ENCODE measurements at regions of chr6 and their contacts with region 1.

Region 1: DNA sequence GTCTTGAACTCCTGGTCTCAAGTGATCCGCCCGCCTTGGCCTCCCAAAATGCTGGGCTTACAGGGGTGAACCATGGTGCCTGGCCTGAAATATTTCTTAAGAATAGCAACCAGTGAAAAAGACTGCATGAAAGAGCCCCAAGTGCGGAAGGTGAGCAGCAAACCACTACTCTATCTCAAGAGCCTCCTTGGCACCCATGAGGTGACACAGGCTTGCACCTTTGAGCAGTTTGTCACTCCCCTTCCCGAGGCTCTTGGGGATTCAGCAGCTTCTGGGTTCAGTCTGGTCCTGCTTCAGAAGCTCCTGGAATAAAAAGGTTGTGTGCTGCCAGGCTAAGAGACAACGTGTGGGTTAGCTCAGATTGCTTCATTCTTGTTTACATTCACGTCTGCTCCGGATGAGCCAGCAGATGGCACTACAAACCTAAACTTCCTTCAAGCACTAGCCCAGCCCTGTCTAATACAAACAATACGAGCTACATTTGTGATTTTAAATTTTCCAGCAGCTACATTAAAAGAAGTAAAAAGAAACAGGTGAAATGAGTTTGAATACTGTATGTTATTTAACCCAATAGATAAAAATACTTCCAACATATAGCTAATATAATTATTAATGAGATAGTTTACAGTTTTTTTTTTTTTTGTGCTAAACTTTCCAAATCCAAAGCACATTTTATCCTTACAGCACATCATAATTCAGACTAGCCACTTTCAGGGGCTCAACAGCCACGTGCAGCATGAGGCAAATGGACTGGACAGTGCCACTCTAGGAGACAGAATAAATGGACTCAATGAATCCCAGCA is 46.2 kb downstream of the GJA10 start:
- DNase-seq: peak; percentile 44 to 92 (median 80)
- H3K4me3 ChIP-seq: peak overlapping the region in 27 of 59 donors; percentile 2 to 47 (median 30)
- H3K27ac ChIP-seq: peak overlapping the region in 58 of 59 donors; percentile 22 to 92 (median 84)
- H3K27me3 ChIP-seq: no peaks in the 10 kb centered on the region
- CTCF ChIP-seq: peak; percentile 23 to 92 (median 81)

Region 2: DNA sequence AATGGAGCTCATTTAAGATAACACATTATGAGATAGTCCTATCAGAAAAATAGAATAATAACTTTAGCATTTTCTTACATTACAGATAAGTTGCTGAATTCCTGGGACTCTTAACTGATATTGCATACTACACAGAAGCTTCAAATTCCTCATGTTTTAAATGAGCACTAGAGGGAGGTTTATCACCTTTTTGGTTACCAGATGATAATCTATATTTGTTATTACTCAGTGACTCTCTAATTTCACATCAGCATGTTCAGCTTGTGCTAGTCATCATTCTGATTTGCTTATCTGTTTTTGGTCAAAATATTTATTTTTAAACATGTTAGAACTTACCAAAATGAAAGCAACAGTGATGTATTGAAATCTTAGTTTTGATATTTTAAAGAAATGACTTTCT is 66.7 kb before region 1 on chr6:
- intact Hi-C with region 1: no loop called
- DNase-seq: no peak
- H3K4me3 ChIP-seq: no peak overlapping the region
- H3K27ac ChIP-seq: no peak overlapping the region
- H3K27me3 ChIP-seq: no peaks in the 10 kb centered on the region
- CTCF ChIP-seq: no peak

Region 3: DNA sequence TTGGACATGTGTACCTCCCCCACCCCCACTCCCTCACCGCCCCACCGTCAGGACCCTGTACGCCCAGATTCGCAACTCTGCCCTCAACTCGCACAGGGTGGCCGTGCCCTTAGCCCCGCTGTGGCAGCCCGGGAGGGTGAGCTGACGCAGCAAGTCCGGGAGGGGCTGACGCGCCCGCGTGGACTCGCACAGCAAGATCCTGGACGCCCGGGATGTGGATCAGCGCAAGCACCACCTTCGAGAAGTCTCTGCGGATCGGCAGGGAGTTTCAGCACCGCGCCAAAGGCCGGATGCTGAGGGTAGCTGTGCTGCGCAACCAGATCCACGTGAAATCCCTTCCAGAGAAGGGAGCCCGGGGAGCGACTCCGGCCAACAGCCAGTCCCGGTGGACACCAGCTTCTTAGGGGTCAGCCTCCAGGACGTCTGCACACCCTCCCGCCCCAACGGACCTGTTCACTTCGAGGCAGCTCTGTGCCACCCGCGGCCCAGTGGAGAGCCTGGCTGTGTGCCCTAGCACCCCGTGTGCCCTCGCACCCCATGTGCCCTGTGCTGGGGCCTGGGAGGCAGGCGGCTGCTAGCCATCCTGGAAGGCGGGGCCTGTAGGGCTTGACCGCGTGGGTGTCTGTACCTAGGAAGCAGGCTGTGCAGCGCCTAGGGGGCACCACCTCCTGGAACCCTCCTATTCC is 52.8 kb before region 1 on chr6:
- intact Hi-C with region 1: no loop called
- DNase-seq: no peak
- H3K4me3 ChIP-seq: peak overlapping the region in 2 of 59 donors; percentile 7 to 13
- H3K27ac ChIP-seq: no peak overlapping the region
- H3K27me3 ChIP-seq: peaks cover 0 to 29% (median 0%) of the 10 kb centered on the region in 45 donors
- CTCF ChIP-seq: no peak

Region 4: GRCh38 chr6:89970609-89971337 is 30.3 kb after region 1 on chr6:
- intact Hi-C with region 1: loop called in 1 of 2 experiments (anchors 1 kb)
- DNase-seq: peak in 7 of 10 donors; percentile 53 to 81 (median 57)
- H3K4me3 ChIP-seq: peak overlapping the region in 3 of 59 donors; percentile 1 to 20 (median 2)
- H3K27ac ChIP-seq: peak overlapping the region in 12 of 59 donors; percentile 10 to 65 (median 19)
- H3K27me3 ChIP-seq: no peaks in the 10 kb centered on the region
- CTCF ChIP-seq: peak; percentile 21 to 83 (median 70)

Region 5: GRCh38 chr6:91475975-91476374 is 1535.5 kb after region 1 on chr6:
- intact Hi-C with region 1: no loop called
- DNase-seq: peak in 1 of 10 donors; percentile 9
- H3K4me3 ChIP-seq: peak overlapping the region in 1 of 59 donors; percentile 28
- H3K27ac ChIP-seq: no peak overlapping the region
- H3K27me3 ChIP-seq: no peaks in the 10 kb centered on the region
- CTCF ChIP-seq: no peak